ENCODE measurements at regions of chr10 and their contacts with region 1.

Region 1: DNA sequence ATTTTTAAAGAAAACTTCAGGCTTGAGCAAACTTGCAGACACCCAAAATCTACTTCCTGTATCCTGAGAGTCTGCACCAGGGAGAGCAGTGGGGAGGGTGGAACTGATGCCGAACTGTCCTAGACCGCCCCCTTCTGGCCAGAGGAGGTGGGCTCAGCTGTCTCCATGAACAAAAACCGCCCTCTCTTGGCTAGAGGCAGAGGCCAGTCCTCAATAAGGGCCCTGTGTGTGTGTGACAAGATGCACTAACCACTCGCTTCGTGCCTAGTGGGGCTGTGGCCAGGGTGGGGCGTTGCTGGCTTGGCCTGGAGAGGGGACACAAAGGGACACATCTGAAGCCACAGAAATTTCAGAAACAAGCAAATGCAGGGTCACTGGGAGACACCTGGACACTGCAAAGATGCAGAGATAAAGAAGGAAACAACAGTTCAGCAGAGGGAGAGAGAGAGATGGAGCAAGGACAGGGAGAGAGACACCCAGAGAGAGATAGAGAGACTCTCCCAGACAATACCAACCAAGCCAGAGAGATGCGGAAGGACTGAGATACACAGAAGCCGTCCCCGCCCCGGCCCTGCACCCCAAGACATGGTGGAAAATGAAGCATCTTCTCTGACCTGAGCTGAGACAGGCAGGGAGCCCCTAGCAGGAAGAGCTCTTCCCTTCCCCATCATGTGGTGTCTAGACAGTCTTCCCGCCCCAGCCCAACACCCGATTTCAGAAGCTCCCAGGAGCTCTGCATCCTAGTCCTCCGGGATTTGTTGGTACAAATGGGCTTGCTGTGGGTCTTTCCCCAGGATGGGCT is 22.7 kb upstream of the FXYD4 start:
- DNase-seq: no peak
- H3K4me3 ChIP-seq: no peak overlapping the region
- H3K27me3 ChIP-seq: peaks cover 7% of the 10 kb centered on the region
- CTCF ChIP-seq: peak; percentile 97

Region 2: GRCh38 chr10:43057231-43057711 is 291.4 kb before region 1 on chr10:
- CTCF ChIA-PET with region 1: no interaction called
- POLR2A ChIA-PET with region 1: no interaction called
- DNase-seq: no peak
- H3K4me3 ChIP-seq: no peak overlapping the region
- H3K27me3 ChIP-seq: no peaks in the 10 kb centered on the region; the same call in 1 of the 2 replicates
- CTCF ChIP-seq: no peak

Region 3: DNA sequence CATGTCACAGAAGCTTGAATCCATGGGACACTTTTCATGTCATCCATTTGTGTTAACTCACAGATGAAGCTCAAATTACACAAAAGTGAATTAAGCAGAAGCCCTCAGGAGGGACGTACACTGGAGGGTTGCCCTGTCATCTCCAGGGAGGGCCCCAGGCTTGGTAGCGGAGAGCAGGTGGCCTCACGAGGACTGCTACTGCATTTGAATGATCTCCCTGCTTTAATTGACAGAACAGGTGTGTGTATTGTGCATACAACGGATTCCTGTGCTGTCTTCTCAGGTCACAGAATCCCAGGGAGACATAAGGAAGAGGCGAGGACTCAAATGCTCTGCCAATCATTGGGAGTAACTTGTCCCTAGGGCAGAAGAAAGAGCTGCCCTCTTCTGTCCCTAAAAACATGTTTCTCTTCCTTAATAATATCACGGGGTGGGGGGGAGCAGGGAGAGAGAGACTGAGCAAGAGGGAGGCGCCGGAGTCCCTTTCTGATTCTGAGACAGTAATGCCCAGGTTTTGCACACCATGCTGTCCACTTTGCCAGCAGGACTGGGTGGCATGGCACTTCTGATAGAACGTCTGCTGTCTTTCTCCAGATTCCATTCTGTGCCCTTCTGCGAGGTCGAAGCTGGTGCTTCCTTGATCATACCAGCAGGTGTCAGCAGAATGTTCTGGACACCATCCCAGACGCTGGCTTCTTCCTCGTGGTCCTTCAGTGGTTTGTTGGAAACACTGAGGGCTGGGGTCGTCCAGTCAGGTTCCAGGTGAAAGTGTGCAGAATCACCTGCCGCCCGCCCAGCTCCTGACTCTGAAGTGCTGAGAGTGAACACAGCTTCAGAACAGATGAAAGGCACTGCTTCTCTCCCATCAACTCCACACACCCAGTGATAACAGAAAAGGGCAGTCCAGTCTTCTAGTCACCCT is 55.7 kb before region 1 on chr10:
- CTCF ChIA-PET with region 1: interaction called, 22 read pairs
- POLR2A ChIA-PET with region 1: no interaction called
- DNase-seq: no peak
- H3K4me3 ChIP-seq: no peak overlapping the region
- H3K27me3 ChIP-seq: peaks cover 7% of the 10 kb centered on the region
- CTCF ChIP-seq: peak; percentile 79

Region 4: GRCh38 chr10:43338113-43338512 is 10.6 kb before region 1 on chr10:
- CTCF ChIA-PET with region 1: interaction called, 12 read pairs
- POLR2A ChIA-PET with region 1: no interaction called
- DNase-seq: no peak
- H3K4me3 ChIP-seq: no peak overlapping the region
- H3K27me3 ChIP-seq: 0 out of 2 replicates have a peak, but pooled peaks cover 5% of the 10 kb centered on the region
- CTCF ChIP-seq: no peak

Measured in BJ (cell line).